ENCODE measurements at regions of chr2 and their contacts with region 1.

Region 1: GRCh38 chr2:233443468-233444183 is 89.3 kb downstream of the DGKD start:
- DNase-seq: peak; percentile 58
- ATAC-seq: peak; percentile 92
- H3K4me3 Mint-ChIP-seq: no peak overlapping the region
- H3K27ac Mint-ChIP-seq: peak overlapping the region; percentile 37
- H3K4me1 Mint-ChIP-seq: peaks cover 14% of the 10 kb centered on the region
- H3K27me3 Mint-ChIP-seq: no peaks in the 10 kb centered on the region
- CTCF ChIP-seq: peak; percentile 26

Region 2: GRCh38 chr2:232761301-232761907 is 682.2 kb before region 1 on chr2:
- CTCF ChIA-PET with region 1: no interaction called
- POLR2A ChIA-PET with region 1: no interaction called
- intact Hi-C with region 1: loop called (anchors 2 kb)
- DNase-seq: no peak
- ATAC-seq: peak; percentile 54
- H3K4me3 Mint-ChIP-seq: no peak overlapping the region
- H3K27ac Mint-ChIP-seq: no peak overlapping the region
- H3K4me1 Mint-ChIP-seq: no peaks in the 10 kb centered on the region
- H3K27me3 Mint-ChIP-seq: no peaks in the 10 kb centered on the region
- CTCF ChIP-seq: no peak

Region 3: DNA sequence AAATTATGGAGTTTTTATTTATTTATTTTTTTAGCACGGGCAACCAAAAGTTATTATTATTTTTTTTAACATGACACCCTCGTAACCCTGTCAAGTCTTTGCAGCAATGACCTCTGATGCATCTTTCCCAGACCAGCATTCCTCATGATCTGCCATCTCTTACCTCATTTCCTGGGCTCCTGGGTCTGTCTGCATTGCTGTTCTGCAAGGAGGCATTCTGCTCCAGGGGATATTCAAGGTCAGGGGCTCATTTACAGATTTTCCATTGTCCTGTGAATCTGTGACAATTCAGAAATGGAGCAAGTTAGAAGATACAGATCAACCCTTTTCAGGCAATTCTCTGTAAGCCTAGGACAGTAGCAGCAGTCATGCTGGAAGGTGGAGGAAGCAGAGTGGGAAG is 473.6 kb before region 1 on chr2:
- CTCF ChIA-PET with region 1: no interaction called
- POLR2A ChIA-PET with region 1: no interaction called
- intact Hi-C with region 1: no loop called
- DNase-seq: no peak
- ATAC-seq: no peak
- H3K4me3 Mint-ChIP-seq: no peak overlapping the region
- H3K27ac Mint-ChIP-seq: no peak overlapping the region
- H3K4me1 Mint-ChIP-seq: no peaks in the 10 kb centered on the region
- H3K27me3 Mint-ChIP-seq: peaks cover 9% of the 10 kb centered on the region
- CTCF ChIP-seq: no peak

Region 4: GRCh38 chr2:233267516-233268245 is 175.9 kb before region 1 on chr2:
- CTCF ChIA-PET with region 1: interaction called, 6 read pairs
- POLR2A ChIA-PET with region 1: no interaction called
- intact Hi-C with region 1: loop called (anchors 2 kb)
- DNase-seq: peak; percentile 20
- ATAC-seq: peak; percentile 91
- H3K4me3 Mint-ChIP-seq: peak overlapping the region; percentile 56
- H3K27ac Mint-ChIP-seq: peak overlapping the region; percentile 82
- H3K4me1 Mint-ChIP-seq: peaks cover 51% of the 10 kb centered on the region
- H3K27me3 Mint-ChIP-seq: no peaks in the 10 kb centered on the region
- CTCF ChIP-seq: no peak

Region 5: GRCh38 chr2:233413559-233414272 is 29.9 kb before region 1 on chr2:
- CTCF ChIA-PET with region 1: interaction called, 210 read pairs
- POLR2A ChIA-PET with region 1: interaction called, 18 read pairs
- intact Hi-C with region 1: loop called (anchors 1 kb)
- DNase-seq: no peak
- ATAC-seq: no peak
- H3K4me3 Mint-ChIP-seq: no peak overlapping the region
- H3K27ac Mint-ChIP-seq: peak overlapping the region; percentile 80
- H3K4me1 Mint-ChIP-seq: peaks cover 90% of the 10 kb centered on the region
- H3K27me3 Mint-ChIP-seq: no peaks in the 10 kb centered on the region
- CTCF ChIP-seq: no peak

Region 6: GRCh38 chr2:233426619-233427342 is 16.8 kb before region 1 on chr2:
- CTCF ChIA-PET with region 1: interaction called, 18 read pairs
- POLR2A ChIA-PET with region 1: interaction called, 5 read pairs
- intact Hi-C with region 1: loop called (anchors 1 kb)
- DNase-seq: no peak
- ATAC-seq: no peak
- H3K4me3 Mint-ChIP-seq: no peak overlapping the region
- H3K27ac Mint-ChIP-seq: peak overlapping the region; percentile 84
- H3K4me1 Mint-ChIP-seq: peaks cover 75% of the 10 kb centered on the region
- H3K27me3 Mint-ChIP-seq: no peaks in the 10 kb centered on the region
- CTCF ChIP-seq: no peak

Region 7: DNA sequence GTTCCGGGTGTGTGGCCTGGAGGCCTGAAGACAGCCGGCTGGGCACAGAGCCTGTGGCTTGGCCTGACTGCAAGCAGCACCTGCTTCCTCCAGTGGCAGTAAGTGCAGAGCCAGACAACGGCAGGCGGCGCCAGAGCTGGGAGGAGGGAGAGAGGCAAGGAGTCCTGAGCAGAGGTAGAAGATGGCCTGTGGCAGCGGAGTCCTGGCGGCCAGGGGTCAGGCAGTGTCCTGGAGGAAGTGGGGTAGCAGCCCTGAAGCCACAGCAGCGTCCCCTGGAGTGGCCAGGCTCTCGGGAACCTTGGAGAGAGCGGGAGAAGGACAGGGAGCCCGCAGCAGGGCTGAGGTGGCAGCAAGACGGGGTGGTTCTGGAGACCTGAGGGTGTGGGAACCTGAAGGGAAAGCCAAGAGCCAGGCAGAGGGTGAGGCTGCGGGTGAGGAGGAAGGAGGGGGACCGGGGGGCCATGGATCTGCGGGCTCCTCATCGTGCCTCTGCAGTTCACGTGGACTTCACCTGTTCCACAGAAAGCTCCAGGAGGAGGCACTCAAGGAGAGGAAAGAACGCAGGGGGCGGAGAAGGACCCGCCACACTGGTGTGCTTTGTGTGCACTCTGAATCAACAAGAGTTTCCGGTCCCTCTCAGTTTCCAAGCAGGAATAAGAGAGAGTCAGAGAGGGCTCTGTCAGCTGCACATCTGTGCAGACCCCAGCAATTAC is 37.0 kb after region 1 on chr2:
- CTCF ChIA-PET with region 1: no interaction called
- POLR2A ChIA-PET with region 1: no interaction called
- intact Hi-C with region 1: no loop called
- DNase-seq: no peak
- ATAC-seq: no peak
- H3K4me3 Mint-ChIP-seq: no peak overlapping the region
- H3K27ac Mint-ChIP-seq: no peak overlapping the region
- H3K4me1 Mint-ChIP-seq: peaks cover 3% of the 10 kb centered on the region
- H3K27me3 Mint-ChIP-seq: no peaks in the 10 kb centered on the region
- CTCF ChIP-seq: no peak

Region 8: GRCh38 chr2:233832869-233833311 is 389.3 kb after region 1 on chr2:
- CTCF ChIA-PET with region 1: no interaction called
- POLR2A ChIA-PET with region 1: no interaction called
- intact Hi-C with region 1: no loop called
- DNase-seq: no peak
- ATAC-seq: no peak
- H3K4me3 Mint-ChIP-seq: no peak overlapping the region
- H3K27ac Mint-ChIP-seq: no peak overlapping the region
- H3K4me1 Mint-ChIP-seq: peaks cover 4% of the 10 kb centered on the region
- H3K27me3 Mint-ChIP-seq: no peaks in the 10 kb centered on the region
- CTCF ChIP-seq: no peak

Region 9: GRCh38 chr2:233867993-233868532 is 424.4 kb after region 1 on chr2 and contains the start of gene MSL3B:
- CTCF ChIA-PET with region 1: no interaction called
- POLR2A ChIA-PET with region 1: no interaction called
- intact Hi-C with region 1: no loop called
- DNase-seq: peak; percentile 57
- ATAC-seq: peak; percentile 87
- H3K4me3 Mint-ChIP-seq: peak within 1 kb of the TSS; percentile 93
- H3K27ac Mint-ChIP-seq: peak within 1 kb of the TSS; percentile 80
- H3K4me1 Mint-ChIP-seq: peaks cover 18% of the 10 kb centered on the region
- H3K27me3 Mint-ChIP-seq: no peaks in the 10 kb centered on the region
- CTCF ChIP-seq: no peak

Measured in activated B cell treated with CpG ODN at 0.5 μM for 24 hours (primary cell).